Transverse colon (tissue), 4 donors: ENCODE measurements at regions of chr5 and their contacts with region 1.

Region 1: DNA sequence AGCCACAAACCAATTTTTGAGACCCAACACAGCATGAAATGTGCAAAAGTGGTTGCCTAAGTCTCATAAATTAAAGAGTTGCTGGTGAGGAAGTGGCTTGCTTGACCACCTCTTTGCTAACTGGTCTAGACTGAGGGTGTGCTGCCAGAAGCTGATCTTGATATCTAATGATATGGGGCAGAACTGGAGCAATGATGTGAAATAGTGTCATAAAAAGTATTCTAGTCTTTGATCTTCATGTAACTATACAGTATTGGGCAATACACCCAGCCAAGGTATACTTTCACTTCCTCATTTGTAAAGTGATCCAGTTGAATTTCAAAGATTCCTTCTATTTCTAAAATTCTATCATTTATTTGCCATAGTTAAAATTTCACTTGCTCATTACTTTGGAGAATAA is 5.9 kb upstream of the YTHDC2 start:
- DNase-seq: no peak
- H3K4me3 ChIP-seq: no peak overlapping the region
- H3K27ac ChIP-seq: no peak overlapping the region
- H3K4me1 ChIP-seq: no peaks in the 10 kb centered on the region
- H3K27me3 ChIP-seq: no peaks in the 10 kb centered on the region
- CTCF ChIP-seq: no peak
- EP300 ChIP-seq: no peak
- POLR2A ChIP-seq: no peak

Region 2: GRCh38 chr5:112995764-112996618 is 511.6 kb before region 1 on chr5:
- in situ Hi-C with region 1: loop called (anchors 10 to 25 kb)
- intact Hi-C with region 1: loop called (anchors 5 kb)
- DNase-seq: peak; percentile 73
- H3K4me3 ChIP-seq: no peak overlapping the region
- H3K27ac ChIP-seq: no peak overlapping the region
- H3K4me1 ChIP-seq: peaks cover 0 to 6% (median 2%) of the 10 kb centered on the region in 4 donors
- H3K27me3 ChIP-seq: no peaks in the 10 kb centered on the region
- CTCF ChIP-seq: peak; percentile 72 to 94 (median 87)
- EP300 ChIP-seq: no peak
- POLR2A ChIP-seq: no peak

Region 3: DNA sequence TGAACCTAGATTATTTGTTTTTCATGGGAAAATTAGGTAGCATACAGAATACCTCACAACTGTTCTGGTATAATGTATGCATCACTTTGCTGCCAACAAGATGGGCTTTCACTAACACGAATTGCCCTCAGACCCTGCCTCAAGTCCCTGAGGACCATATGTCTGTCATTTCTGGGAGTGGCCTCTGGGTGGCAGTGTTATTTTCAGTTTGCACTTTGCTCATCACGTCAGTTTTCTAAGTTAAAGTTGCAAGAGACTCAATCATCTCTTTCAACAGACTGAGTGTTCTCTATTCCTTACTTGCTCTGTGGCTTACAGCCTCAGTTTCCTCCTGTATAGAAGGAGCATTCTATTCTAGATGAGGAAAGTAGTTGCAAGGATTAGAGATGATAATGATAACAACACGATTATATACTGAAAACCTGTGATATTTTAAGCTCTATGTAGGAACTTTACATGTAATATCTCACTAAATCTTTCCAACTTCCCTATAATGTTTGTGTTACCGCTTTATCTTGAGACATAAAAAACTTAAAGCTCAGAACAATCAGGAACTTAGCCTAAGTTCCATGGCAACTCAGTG is 128.6 kb before region 1 on chr5:
- in situ Hi-C with region 1: loop called in 1 of 4 experiments (anchors 10 kb)
- intact Hi-C with region 1: loop called (anchors 10 kb)
- DNase-seq: peak; percentile 63
- H3K4me3 ChIP-seq: no peak overlapping the region
- H3K27ac ChIP-seq: no peak overlapping the region
- H3K4me1 ChIP-seq: no peaks in the 10 kb centered on the region
- H3K27me3 ChIP-seq: no peaks in the 10 kb centered on the region
- CTCF ChIP-seq: peak; percentile 57 to 72 (median 68)
- EP300 ChIP-seq: no peak
- POLR2A ChIP-seq: no peak